ENCODE measurements at regions of chr17 and their contacts with region 1.

Region 1: DNA sequence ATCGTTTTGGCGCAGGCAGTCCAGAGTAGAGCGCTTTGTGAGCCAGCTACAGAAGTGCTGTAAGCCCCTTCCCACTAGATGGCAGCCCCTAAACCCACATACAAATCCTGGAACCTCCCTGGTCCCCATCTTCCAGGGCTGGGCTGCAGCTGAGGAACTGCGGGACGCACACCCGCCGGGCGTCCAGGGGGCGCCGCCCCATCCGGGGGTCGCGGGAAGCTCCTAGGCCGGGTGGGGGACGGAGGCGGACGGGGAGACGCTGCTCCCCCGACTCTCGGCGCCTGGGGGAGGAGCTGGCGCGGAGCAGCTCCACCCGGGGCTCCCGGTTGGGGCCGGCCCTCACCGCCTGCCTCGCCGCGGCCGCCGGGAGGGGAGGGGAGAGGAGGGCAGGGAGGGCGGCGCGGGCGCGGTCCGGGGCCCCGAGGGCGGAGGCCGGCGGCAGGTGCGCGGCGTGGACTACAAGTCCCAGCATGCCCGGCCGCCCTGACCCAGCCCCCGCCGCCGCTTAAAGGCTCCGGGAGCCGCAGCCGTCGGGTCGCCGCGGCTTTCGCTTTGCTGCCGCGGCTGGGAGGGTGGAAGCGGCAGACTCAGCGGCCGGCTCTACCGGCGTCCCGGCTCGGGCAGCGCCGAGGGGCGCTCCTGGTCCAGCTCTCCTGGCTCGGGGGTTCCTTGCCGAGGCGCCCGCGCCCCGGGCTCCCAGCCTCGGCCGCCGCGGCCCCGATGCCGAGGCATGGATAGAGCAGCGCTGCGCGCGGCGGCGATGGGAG is at the start of gene KSR1:
- DNase-seq: peak; percentile 66 to 86 (median 76)
- ATAC-seq: peak; percentile 95
- H3K4me3 ChIP-seq: peak within 1 kb of the TSS; percentile 71
- H3K4me3 Mint-ChIP-seq: peak within 1 kb of the TSS; percentile 79 to 96 (median 90)
- H3K27ac ChIP-seq: peak within 1 kb of the TSS; percentile 65
- H3K27ac Mint-ChIP-seq: peak within 1 kb of the TSS; percentile 62 to 95 (median 85)
- H3K4me1 ChIP-seq: peaks cover 10 to 13% of the 10 kb centered on the region in 2 donors
- H3K4me1 Mint-ChIP-seq: peaks cover 5 to 49% (median 21%) of the 10 kb centered on the region in 7 donors
- H3K27me3 ChIP-seq: no peaks in the 10 kb centered on the region
- H3K27me3 Mint-ChIP-seq: no peaks in the 10 kb centered on the region
- total RNA-seq, gene KSR1: 22.5 to 96.4 (median 27.8) TPM

Region 2: GRCh38 chr17:27332485-27333409 is 123.3 kb before region 1 on chr17:
- CTCF ChIA-PET with region 1: no interaction called
- POLR2A ChIA-PET with region 1: no interaction called
- intact Hi-C with region 1: loop called in 1 of 2 experiments (anchors 1 kb)
- DNase-seq: peak; percentile 49 to 90 (median 71)
- ATAC-seq: peak; percentile 94
- H3K4me3 ChIP-seq: peak overlapping the region; percentile 72
- H3K4me3 Mint-ChIP-seq: peak overlapping the region; percentile 75 to 90 (median 86)
- H3K27ac ChIP-seq: peak overlapping the region; percentile 23
- H3K27ac Mint-ChIP-seq: peak overlapping the region in 8 of 9 donors; percentile 43 to 92 (median 80)
- H3K4me1 ChIP-seq: peaks cover 6 to 10% of the 10 kb centered on the region in 2 donors
- H3K4me1 Mint-ChIP-seq: peaks cover 6 to 25% (median 18%) of the 10 kb centered on the region in 7 donors
- H3K27me3 ChIP-seq: no peaks in the 10 kb centered on the region
- H3K27me3 Mint-ChIP-seq: peaks cover 0 to 3% (median 0%) of the 10 kb centered on the region in 5 donors

Region 3: DNA sequence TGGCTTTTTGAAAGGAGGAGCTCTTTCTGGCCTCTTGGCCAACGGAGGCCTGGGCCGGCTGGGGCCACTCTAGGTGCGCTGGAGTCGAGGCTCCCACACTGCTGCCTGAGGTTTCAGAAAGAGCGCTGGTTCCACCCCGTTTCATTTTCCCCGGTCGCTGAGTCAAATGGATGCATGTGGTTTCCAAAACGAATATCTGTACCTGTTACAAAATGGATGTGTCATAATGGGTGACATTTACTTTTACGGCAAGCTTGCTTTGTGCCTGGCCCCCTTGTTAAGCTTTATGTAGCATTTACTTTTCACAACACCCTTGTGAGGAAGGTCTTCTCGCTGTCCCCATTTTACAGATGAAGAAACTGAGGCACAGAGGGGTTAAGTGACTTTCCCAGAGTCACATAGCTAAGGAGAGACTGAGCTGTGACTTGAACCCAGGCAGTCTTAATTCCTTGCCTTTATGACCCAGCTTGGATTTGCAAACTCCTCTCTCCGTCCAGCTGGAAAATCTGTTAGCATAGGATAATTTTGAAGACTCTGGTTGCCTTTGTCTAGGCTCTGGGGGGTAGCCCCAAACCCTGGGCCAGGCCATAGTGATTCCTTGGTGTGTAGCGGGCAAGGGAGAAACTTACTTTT is 10.8 kb after region 1 on chr17:
- CTCF ChIA-PET with region 1: interaction called, 3 read pairs
- POLR2A ChIA-PET with region 1: interaction called, 3 read pairs
- intact Hi-C with region 1: loop called in 1 of 2 experiments (anchors 1 kb)
- DNase-seq: peak in 2 of 9 donors; percentile 7 to 76
- ATAC-seq: peak; percentile 80
- H3K4me3 ChIP-seq: peak overlapping the region; percentile 31
- H3K4me3 Mint-ChIP-seq: peak overlapping the region in 9 of 10 donors; percentile 32 to 86 (median 53)
- H3K27ac ChIP-seq: no peak overlapping the region
- H3K27ac Mint-ChIP-seq: peak overlapping the region in 4 of 9 donors; percentile 36 to 97 (median 71)
- H3K4me1 ChIP-seq: peaks cover 0 to 25% of the 10 kb centered on the region in 2 donors
- H3K4me1 Mint-ChIP-seq: peaks cover 28 to 88% (median 34%) of the 10 kb centered on the region in 7 donors
- H3K27me3 ChIP-seq: no peaks in the 10 kb centered on the region
- H3K27me3 Mint-ChIP-seq: no peaks in the 10 kb centered on the region

Region 4: GRCh38 chr17:27526604-27527230 is 70.6 kb after region 1 on chr17:
- CTCF ChIA-PET with region 1: no interaction called
- POLR2A ChIA-PET with region 1: no interaction called
- intact Hi-C with region 1: loop called in 1 of 2 experiments (anchors 2 kb)
- DNase-seq: peak in 3 of 9 donors; percentile 4 to 60 (median 8)
- ATAC-seq: peak; percentile 79
- H3K4me3 ChIP-seq: no peak overlapping the region
- H3K4me3 Mint-ChIP-seq: peak overlapping the region in 7 of 10 donors; percentile 22 to 74 (median 43)
- H3K27ac ChIP-seq: no peak overlapping the region
- H3K27ac Mint-ChIP-seq: peak overlapping the region in 4 of 9 donors; percentile 12 to 74 (median 40)
- H3K4me1 ChIP-seq: no peaks in the 10 kb centered on the region
- H3K4me1 Mint-ChIP-seq: peaks cover 13 to 92% (median 31%) of the 10 kb centered on the region in 7 donors
- H3K27me3 ChIP-seq: no peaks in the 10 kb centered on the region
- H3K27me3 Mint-ChIP-seq: no peaks in the 10 kb centered on the region

Region 5: DNA sequence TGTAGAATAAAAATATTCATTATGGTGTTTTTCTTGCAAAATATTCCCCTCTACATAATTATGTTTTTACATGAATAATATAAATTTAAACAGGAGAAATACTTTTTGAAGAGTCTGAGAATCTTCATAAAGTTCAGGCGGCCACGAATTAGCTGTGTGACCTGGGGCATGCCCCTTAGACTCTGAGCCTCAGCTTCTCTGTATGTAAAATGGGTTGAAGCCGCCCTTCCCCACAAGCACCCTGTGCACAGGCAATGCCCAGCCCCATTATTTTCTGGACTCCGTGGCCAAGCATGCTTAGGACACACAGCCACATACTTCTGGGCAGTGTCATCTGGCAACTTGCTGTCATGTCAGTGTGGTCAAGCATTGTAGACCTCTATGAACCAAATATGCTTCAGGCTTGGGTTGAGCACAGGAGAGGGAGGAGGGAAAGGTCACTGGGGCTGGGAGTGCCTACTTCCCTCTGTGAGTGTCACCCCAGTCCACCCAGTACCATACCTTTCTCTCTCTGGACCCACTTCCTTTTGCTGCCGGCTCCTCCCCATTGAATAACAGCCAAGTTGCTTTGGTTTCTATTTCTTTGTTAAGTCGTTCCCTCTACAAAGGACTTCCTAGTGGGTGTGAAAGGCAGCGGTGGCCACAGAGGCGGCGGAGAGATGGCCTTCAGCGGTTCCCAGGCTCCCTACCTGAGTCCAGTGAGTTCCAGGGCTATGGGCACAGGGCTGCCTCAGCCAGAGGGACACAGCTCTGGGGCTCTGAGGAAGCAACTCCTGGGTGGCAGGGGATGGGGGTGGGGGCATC is 174.7 kb after region 1 on chr17 and contains the start of gene LGALS9:
- CTCF ChIA-PET with region 1: no interaction called
- POLR2A ChIA-PET with region 1: no interaction called
- intact Hi-C with region 1: loop called in 1 of 2 experiments (anchors 10 kb)
- DNase-seq: peak in 8 of 9 donors; percentile 23 to 55 (median 46)
- ATAC-seq: peak; percentile 74
- H3K4me3 ChIP-seq: peak within 1 kb of the TSS; percentile 91
- H3K4me3 Mint-ChIP-seq: peak within 1 kb of the TSS; percentile 88 to 96 (median 93)
- H3K27ac ChIP-seq: peak within 1 kb of the TSS; percentile 69
- H3K27ac Mint-ChIP-seq: peak within 1 kb of the TSS; percentile 84 to 98 (median 92)
- H3K4me1 ChIP-seq: peaks cover 13 to 18% of the 10 kb centered on the region in 2 donors
- H3K4me1 Mint-ChIP-seq: peaks cover 36 to 56% (median 53%) of the 10 kb centered on the region in 7 donors
- H3K27me3 ChIP-seq: no peaks in the 10 kb centered on the region
- H3K27me3 Mint-ChIP-seq: no peaks in the 10 kb centered on the region
- total RNA-seq, gene LGALS9: 11.0 to 198 (median 47.7) TPM